ENCODE measurements at regions of chr9 and their contacts with region 1.

Region 1: DNA sequence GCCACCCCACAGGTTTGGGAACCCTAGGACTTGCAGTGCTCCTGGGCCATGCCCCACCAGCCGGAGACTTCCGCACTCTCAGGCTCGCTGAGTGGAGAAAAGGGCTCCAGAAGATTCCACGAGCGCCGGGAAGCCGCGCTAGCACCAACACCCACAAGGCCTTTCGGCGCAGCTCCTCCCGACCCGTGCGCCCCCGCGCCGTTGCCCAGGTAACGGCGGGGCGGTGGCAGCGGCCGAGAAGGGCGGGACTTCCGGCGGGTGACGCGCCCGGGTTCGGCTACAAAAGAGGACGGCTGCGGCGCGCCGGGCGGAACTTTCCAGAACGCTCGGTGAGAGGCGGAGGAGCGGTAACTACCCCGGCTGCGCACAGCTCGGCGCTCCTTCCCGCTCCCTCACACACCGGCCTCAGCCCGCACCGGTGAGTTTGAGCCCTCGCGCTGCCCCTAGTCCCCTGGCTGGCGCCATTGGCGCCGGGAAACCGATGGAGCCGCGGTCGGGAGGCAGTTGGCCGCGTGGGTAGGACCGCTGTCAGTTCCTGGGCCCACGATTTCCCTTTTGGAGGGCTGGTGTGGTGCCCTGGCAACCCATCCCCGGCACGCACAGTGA is at the start of gene DNAJA1:
- DNase-seq: peak; percentile 94
- ATAC-seq: peak; percentile 80
- H3K4me3 Mint-ChIP-seq: peak within 1 kb of the TSS; percentile 96
- H3K27ac Mint-ChIP-seq: peak within 1 kb of the TSS; percentile 91
- H3K4me1 Mint-ChIP-seq: peaks cover 60% of the 10 kb centered on the region
- H3K27me3 Mint-ChIP-seq: no peaks in the 10 kb centered on the region
- total RNA-seq, gene DNAJA1: 158 to 159 TPM

Region 2: GRCh38 chr9:32526041-32526706 is 498.9 kb before region 1 on chr9 and contains the start of gene RIGI:
- CTCF ChIA-PET with region 1: no interaction called
- POLR2A ChIA-PET with region 1: interaction called, 14 read pairs
- DNase-seq: peak; percentile 86
- ATAC-seq: peak; percentile 81
- H3K4me3 Mint-ChIP-seq: peak within 1 kb of the TSS; percentile 98
- H3K27ac Mint-ChIP-seq: peak within 1 kb of the TSS; percentile 96
- H3K4me1 Mint-ChIP-seq: peaks cover 57% of the 10 kb centered on the region
- H3K27me3 Mint-ChIP-seq: no peaks in the 10 kb centered on the region
- total RNA-seq, gene RIGI: 19.2 to 19.6 TPM

Region 3: DNA sequence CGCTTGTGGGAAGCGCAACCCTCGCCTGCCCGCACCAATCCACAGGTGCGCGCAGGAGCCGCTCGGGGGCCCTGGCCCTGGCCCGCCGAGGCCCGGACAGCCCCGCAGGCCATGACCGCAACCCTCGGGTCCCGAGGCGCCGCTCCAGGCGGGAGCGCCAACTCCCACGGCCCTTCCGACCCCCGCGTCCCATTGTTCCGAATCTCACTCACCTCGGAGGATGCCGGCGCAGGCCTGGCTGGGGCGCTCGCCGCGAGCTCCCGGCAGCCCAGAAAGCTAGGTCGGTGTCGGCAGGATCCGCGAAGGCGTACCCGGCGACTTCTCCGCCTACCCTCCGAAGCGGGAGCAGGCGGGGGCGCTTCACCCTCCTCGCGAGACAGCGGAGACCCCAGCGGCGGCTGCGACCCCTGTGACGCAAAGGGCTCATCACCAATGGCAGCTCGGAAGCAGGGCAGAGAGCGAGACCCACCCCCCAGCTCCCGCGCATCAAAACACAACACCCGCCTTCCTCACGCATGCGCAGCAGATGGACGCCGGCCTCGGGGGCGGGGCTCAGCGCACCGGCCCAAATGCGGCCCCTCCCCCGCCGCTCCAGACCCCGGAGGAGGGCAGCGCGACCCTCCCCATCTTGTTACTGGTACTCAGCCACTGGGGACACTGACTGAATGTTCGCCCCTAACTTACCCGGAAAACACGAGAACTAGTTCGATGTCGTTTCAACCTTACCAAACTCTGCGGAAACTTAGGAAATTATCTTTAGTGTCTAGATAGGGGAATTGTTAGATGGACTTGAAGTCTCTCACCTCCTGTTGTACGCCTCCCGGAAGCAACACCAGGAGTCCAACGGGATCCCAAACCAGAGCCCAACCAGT is 474.3 kb before region 1 on chr9:
- CTCF ChIA-PET with region 1: no interaction called
- POLR2A ChIA-PET with region 1: interaction called, 10 read pairs
- DNase-seq: peak; percentile 95
- ATAC-seq: peak; percentile 81
- H3K4me3 Mint-ChIP-seq: peak overlapping the region; percentile 89
- H3K27ac Mint-ChIP-seq: peak overlapping the region; percentile 99
- H3K4me1 Mint-ChIP-seq: peaks cover 30% of the 10 kb centered on the region
- H3K27me3 Mint-ChIP-seq: no peaks in the 10 kb centered on the region

Region 4: GRCh38 chr9:32723789-32724325 is 301.2 kb before region 1 on chr9:
- CTCF ChIA-PET with region 1: no interaction called
- POLR2A ChIA-PET with region 1: no interaction called
- DNase-seq: no peak
- ATAC-seq: no peak
- H3K4me3 Mint-ChIP-seq: no peak overlapping the region
- H3K27ac Mint-ChIP-seq: no peak overlapping the region
- H3K4me1 Mint-ChIP-seq: no peaks in the 10 kb centered on the region
- H3K27me3 Mint-ChIP-seq: no peaks in the 10 kb centered on the region

Region 5: DNA sequence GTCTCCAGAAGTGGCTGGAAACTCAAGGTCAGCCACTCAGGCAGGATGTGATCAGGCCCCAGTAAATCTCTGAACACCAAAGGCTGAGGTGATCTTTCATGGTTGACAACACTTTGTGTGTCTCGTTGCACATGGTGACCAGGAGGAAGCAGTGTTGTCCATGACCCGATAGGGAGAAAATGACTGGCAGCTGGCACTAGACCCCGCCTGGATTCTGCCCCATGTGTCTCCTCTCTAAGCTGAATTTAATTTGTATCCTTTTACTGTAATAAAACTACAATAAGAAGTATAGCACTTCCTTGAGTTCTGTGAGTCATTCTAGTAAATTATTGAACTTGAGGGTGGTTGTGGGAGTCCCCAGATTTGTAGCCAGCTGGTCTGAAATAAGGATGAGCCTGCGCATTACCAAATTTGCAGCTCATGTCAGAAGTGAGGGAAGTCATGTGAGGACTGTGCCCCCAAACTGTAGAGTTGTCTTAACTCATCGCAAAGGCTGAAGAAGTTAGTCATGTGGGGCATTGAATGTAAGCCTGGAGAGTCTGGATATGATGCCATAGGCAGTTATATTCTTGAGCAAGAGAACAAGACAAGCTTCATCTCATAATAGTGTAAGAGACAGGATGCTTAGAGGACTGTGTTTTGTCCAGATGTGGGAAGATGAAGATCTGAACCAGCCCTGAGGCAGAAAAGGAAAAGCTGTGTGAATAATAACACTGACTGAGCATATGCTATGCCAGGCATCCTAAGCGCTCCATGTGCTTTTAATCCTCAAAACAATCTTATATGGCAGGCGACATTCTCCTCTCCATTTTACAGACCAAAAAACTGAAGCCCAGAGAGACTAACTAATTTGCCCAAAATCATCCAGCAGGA is 185.8 kb before region 1 on chr9:
- CTCF ChIA-PET with region 1: no interaction called
- POLR2A ChIA-PET with region 1: no interaction called
- DNase-seq: no peak
- ATAC-seq: no peak
- H3K4me3 Mint-ChIP-seq: no peak overlapping the region
- H3K27ac Mint-ChIP-seq: no peak overlapping the region
- H3K4me1 Mint-ChIP-seq: no peaks in the 10 kb centered on the region
- H3K27me3 Mint-ChIP-seq: peaks cover 4% of the 10 kb centered on the region

Region 6: GRCh38 chr9:33012328-33013069 is 12.6 kb before region 1 on chr9:
- CTCF ChIA-PET with region 1: no interaction called
- POLR2A ChIA-PET with region 1: interaction called, 35 read pairs
- DNase-seq: no peak
- ATAC-seq: no peak
- H3K4me3 Mint-ChIP-seq: no peak overlapping the region
- H3K27ac Mint-ChIP-seq: no peak overlapping the region
- H3K4me1 Mint-ChIP-seq: no peaks in the 10 kb centered on the region
- H3K27me3 Mint-ChIP-seq: no peaks in the 10 kb centered on the region

Region 7: GRCh38 chr9:33044127-33044673 is 19.1 kb after region 1 on chr9:
- CTCF ChIA-PET with region 1: interaction called, 5 read pairs
- POLR2A ChIA-PET with region 1: interaction called, 40 read pairs
- DNase-seq: peak; percentile 78
- ATAC-seq: peak; percentile 66
- H3K4me3 Mint-ChIP-seq: peak overlapping the region; percentile 76
- H3K27ac Mint-ChIP-seq: peak overlapping the region; percentile 79
- H3K4me1 Mint-ChIP-seq: peaks cover 22% of the 10 kb centered on the region
- H3K27me3 Mint-ChIP-seq: no peaks in the 10 kb centered on the region

Region 8: DNA sequence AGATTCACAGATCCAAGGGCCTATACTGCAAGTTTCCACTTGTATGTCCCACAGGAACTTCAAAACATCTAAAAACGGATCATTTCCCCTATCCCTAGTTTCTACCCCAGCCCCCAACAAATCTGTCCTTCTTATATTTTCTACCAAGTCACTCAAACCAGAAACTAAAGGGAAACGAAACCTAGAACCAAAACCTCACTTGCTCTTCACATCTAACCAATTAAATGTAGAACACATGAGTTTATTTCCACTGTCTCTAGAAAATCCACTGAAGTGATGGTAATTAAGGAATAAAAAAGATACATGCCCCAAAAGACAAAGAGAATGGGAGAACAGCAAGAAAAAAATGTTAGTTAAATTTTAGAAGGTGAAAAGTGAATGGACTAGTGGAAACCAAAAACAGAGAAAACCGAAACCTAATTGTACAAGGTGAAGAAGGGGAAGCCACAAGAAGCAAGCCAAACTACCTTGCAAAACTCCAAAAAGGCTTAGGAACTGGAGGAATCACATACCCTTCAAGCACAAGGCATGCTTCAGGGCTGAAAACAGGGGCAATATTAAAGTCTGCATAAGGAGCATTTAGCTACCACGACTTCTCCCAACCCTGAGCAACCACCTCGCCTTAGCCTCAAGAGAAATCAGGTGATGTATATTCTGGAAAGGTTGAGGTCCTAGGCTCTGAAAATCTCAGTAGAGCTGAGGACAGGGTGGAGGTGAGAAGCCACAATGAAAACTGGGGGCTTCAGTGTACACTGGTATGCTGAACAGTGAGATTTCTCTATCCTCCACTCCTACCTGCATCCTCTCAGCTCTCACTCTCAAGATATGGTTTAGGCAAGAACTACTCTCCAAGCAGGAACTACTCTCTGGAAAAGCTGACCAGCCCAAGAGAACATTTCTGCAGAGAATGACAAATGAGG is 40.3 kb after region 1 on chr9:
- CTCF ChIA-PET with region 1: interaction called, 4 read pairs
- POLR2A ChIA-PET with region 1: interaction called, 10 read pairs
- DNase-seq: no peak
- ATAC-seq: peak; percentile 41
- H3K4me3 Mint-ChIP-seq: no peak overlapping the region
- H3K27ac Mint-ChIP-seq: peak overlapping the region; percentile 64
- H3K4me1 Mint-ChIP-seq: peaks cover 14% of the 10 kb centered on the region
- H3K27me3 Mint-ChIP-seq: no peaks in the 10 kb centered on the region

Region 9: GRCh38 chr9:33076358-33077004 is 51.4 kb after region 1 on chr9 and contains the start of gene SMU1:
- CTCF ChIA-PET with region 1: no interaction called
- POLR2A ChIA-PET with region 1: interaction called, 31 read pairs
- DNase-seq: peak; percentile 98
- ATAC-seq: peak; percentile 98
- H3K4me3 Mint-ChIP-seq: peak within 1 kb of the TSS; percentile 98
- H3K27ac Mint-ChIP-seq: peak within 1 kb of the TSS; percentile 100
- H3K4me1 Mint-ChIP-seq: peaks cover 28% of the 10 kb centered on the region
- H3K27me3 Mint-ChIP-seq: no peaks in the 10 kb centered on the region
- total RNA-seq, gene SMU1: 21.7 to 22.6 TPM